ENCODE measurements at regions of chr14 and their contacts with region 1.

Region 1: GRCh38 chr14:50116181-50116956 is at the start of gene VCPKMT:
- ATAC-seq: peak; percentile 95 to 99 (median 99)
- H3K4me3 ChIP-seq: peak within 1 kb of the TSS; percentile 73 to 94 (median 85)
- H3K27ac ChIP-seq: peak within 1 kb of the TSS; percentile 84 to 94
- H3K4me1 ChIP-seq: peaks cover 10 to 14% of the 10 kb centered on the region in 2 donors
- total RNA-seq, gene VCPKMT: 9.2 to 12.3 (median 10.7) TPM

Region 2: GRCh38 chr14:49633640-49634546 is 482.5 kb before region 1 on chr14:
- in situ Hi-C with region 1: loop called in 1 of 9 experiments (anchors 25 kb)
- ATAC-seq: peak; percentile 69 to 90 (median 85)
- H3K4me3 ChIP-seq: peak overlapping the region; percentile 56 to 90 (median 70)
- H3K27ac ChIP-seq: peak overlapping the region; percentile 88 to 92
- H3K4me1 ChIP-seq: peaks cover 6 to 13% of the 10 kb centered on the region in 2 donors

Region 3: GRCh38 chr14:49852301-49853157 is 263.8 kb before region 1 on chr14 and contains the start of gene NEMF:
- in situ Hi-C with region 1: loop called in 5 of 9 experiments (anchors 25 kb)
- ATAC-seq: peak; percentile 78 to 97 (median 96)
- H3K4me3 ChIP-seq: peak within 1 kb of the TSS; percentile 50 to 79 (median 75)
- H3K27ac ChIP-seq: peak within 1 kb of the TSS; percentile 90 to 92
- H3K4me1 ChIP-seq: peaks cover 8 to 11% of the 10 kb centered on the region in 2 donors
- total RNA-seq, gene NEMF: 49.3 to 120 (median 69.2) TPM

Region 4: DNA sequence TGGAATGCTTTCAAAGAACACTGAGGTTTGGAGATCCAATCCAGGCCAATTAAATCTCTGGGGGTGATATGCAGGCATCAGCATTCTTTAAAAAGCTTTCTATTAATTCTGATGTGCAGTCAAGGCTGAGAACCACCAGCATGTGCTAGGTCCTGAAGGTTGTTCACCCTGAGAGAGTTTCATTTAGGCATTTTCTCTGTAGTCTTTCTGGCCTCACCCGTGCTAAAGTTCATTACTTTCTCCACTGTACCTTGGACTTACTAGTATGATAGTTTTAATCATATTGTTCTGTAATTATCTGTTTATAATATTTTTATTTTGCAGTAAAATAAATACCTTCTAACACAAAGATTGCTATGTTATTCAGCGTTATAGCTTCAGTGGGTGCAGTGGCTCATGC is 82.1 kb after region 1 on chr14:
- in situ Hi-C with region 1: no loop called
- ATAC-seq: no peak
- H3K4me3 ChIP-seq: no peak overlapping the region
- H3K27ac ChIP-seq: no peak overlapping the region
- H3K4me1 ChIP-seq: no peaks in the 10 kb centered on the region

Measured in motor neuron (in vitro differentiated cells).